Endothelial cell of umbilical vein (primary cell): ENCODE measurements at regions of chr14 and their contacts with region 1.

Region 1: DNA sequence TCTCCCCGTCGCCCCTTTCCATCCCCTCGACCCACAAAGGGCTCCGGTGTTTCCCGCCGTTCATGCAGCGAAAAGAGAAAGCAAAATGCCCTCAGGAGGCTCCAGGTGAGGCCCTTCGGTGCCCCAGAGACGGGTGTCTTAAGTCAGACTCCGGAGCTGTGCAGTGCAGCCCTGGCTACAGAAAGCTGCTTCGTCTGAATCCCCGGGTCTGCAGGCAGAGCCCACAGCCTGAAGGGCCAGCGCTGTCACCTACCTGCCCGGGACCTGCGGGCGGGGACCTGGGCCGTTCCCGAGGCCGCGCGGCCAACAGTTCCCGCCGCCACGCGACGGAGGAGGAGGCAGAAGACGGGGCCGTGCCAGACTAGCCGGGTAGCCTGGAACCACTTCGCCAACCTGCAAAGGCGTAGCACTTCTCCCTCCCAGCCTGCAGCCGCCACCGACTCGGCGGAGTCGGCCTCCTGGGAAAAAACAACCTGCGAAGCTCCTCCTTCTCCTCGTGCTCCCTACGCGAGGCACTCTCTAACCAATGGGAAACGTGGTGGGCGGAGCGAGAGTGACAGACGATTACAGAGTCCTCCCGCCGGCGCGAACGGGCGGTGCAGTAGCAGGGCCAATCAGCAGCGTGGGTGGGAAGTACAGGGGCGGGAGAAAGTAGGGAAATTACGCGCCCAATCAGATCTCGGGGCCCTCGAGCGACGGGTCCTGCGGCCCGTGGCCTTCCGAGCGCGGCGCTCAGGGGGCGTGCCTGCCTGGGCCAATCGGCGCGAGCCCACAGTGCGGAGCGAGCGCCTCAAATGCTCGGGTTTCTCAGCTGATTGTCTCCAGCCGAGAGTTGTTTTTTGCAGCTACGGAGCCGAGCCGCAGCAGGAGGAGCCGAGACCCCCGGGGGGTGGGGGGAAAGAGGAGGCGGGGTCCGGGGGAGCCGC is at the starts of genes GPR137C and TXNDC16:
- DNase-seq: peak; percentile 100
- H3K4me3 ChIP-seq: peak within 1 kb of the TSS; percentile 76 to 88 (median 84)
- H3K27ac ChIP-seq: peak within 1 kb of the TSS; percentile 37
- H3K4me1 ChIP-seq: peaks cover 9% of the 10 kb centered on the region
- H3K27me3 ChIP-seq: no peaks in the 10 kb centered on the region
- CTCF ChIP-seq: no peak
- POLR2A ChIP-seq: no peak
- total RNA-seq, gene GPR137C: 3.8 and 5.7 TPM in 2 replicates
- total RNA-seq, gene TXNDC16: 4.5 and 4.8 TPM in 2 replicates

Region 2: DNA sequence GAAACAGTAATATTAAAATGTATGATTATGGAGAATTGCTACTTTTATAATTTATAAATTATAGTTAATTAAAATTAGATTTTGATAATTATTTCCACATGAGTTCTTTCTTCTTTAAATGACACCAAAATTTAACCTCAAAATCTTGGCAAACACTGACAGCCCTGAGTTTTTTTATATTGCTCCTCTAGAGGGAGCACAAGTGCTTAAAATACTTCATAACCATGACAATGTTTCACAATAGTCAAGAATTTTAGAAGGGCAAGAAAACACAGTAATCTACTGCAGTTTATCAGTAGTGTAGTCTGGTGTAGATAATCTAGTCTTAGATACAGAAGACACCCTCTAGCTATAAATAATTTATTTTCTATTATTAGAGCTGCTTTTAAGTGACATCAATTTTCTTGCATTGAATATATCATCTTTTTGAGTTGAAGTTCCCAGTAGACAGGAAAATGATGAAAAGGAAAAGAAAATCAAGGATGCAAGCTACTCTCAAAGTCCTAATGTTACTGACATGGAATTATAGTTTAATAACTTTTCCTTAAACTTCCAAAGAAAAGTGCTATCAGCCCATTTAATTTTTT is 252.5 kb before region 1 on chr14:
- CTCF ChIA-PET with region 1: no interaction called
- POLR2A ChIA-PET with region 1: no interaction called
- dilution Hi-C with region 1: no loop called
- intact Hi-C with region 1: loop called (anchors 2 kb)
- DNase-seq: peak; percentile 47
- H3K4me3 ChIP-seq: no peak overlapping the region
- H3K27ac ChIP-seq: no peak overlapping the region
- H3K4me1 ChIP-seq: no peaks in the 10 kb centered on the region
- H3K27me3 ChIP-seq: peaks cover 8 to 17% of the 10 kb centered on the region in 2 experiments
- CTCF ChIP-seq: peak; percentile 33 to 35
- POLR2A ChIP-seq: no peak

Region 3: DNA sequence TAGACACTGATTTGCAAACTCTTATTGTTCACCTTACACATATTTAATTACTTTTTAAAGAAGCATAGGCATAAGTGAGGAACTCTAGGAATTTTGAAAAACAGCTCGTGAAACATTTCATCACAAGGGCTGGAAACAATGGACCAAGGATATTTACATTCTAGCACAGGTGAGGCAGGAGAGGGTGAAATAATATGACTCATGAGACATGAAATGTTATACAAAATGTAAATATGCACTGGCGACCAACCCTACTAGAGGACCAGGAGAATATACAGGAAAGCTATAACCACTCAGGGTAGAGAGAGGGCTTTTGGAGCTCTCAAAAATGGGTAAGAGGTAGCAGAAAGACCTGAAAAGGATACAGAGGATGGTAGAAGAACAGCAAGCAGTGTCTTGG is 122.9 kb before region 1 on chr14:
- CTCF ChIA-PET with region 1: no interaction called
- POLR2A ChIA-PET with region 1: no interaction called
- dilution Hi-C with region 1: no loop called
- intact Hi-C with region 1: no loop called
- DNase-seq: no peak
- H3K4me3 ChIP-seq: no peak overlapping the region
- H3K27ac ChIP-seq: no peak overlapping the region
- H3K4me1 ChIP-seq: no peaks in the 10 kb centered on the region
- H3K27me3 ChIP-seq: no peaks in the 10 kb centered on the region
- CTCF ChIP-seq: no peak
- POLR2A ChIP-seq: no peak

Region 4: GRCh38 chr14:52602131-52602530 is 49.8 kb after region 1 on chr14:
- CTCF ChIA-PET with region 1: no interaction called
- POLR2A ChIA-PET with region 1: no interaction called
- dilution Hi-C with region 1: no loop called
- intact Hi-C with region 1: no loop called
- DNase-seq: no peak
- H3K4me3 ChIP-seq: no peak overlapping the region
- H3K27ac ChIP-seq: no peak overlapping the region
- H3K4me1 ChIP-seq: no peaks in the 10 kb centered on the region
- H3K27me3 ChIP-seq: no peaks in the 10 kb centered on the region
- CTCF ChIP-seq: no peak
- POLR2A ChIP-seq: no peak

Region 5: DNA sequence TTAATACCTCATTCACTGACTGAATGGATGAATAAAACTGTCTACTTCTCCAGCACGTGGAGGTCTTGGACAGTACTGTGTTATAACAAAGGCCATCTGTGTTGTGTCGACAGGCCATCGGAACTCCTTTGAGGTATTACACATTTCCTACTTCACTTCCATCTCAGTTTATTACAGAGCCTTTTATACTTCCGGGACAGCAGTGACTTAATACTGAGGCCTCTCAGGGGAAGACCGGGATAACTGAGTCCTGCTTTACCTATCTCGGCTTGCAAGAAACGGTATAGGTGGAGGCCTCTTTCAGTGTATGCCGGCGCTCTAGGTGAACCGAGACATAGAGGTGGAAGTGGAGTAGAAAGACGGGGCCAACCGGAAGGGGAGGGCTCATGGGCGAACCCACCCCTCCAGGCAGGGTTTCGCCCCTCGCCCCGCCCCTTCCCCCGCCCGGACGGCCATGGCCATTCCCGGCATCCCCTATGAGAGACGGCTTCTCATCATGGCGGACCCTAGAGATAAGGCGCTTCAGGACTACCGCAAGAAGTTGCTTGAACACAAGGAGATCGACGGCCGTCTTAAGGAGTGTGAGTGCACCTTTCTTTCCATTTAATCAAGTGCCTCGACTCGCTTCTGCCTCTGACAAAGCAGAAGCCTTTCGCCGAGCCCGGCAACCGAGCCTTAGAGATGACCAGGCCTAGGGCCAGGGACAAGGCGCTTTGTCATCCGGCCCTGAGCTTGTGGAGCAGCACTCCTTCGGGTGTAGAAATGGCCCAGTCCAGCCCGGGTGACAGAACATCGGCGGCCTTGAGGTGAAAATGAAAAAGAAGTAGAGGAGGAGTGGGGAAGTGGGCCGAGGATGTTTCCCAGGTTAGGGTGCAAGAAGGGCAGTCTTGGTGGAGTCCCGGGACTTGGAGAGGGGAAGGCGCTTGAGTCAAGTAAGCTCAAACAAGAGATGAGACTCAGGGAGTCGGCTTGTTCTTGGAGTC is 154.7 kb after region 1 on chr14 and contains the start of gene PSMC6:
- CTCF ChIA-PET with region 1: no interaction called
- POLR2A ChIA-PET with region 1: interaction called, 3 read pairs
- dilution Hi-C with region 1: no loop called
- intact Hi-C with region 1: loop called (anchors 1 kb)
- DNase-seq: peak; percentile 94
- H3K4me3 ChIP-seq: peak within 1 kb of the TSS; percentile 40 to 96 (median 47)
- H3K27ac ChIP-seq: peak within 1 kb of the TSS; percentile 82
- H3K4me1 ChIP-seq: peaks cover 19% of the 10 kb centered on the region
- H3K27me3 ChIP-seq: no peaks in the 10 kb centered on the region
- CTCF ChIP-seq: no peak
- POLR2A ChIP-seq: peak; percentile 81
- total RNA-seq, gene PSMC6: 92.1 and 103 TPM in 2 replicates

Region 6: DNA sequence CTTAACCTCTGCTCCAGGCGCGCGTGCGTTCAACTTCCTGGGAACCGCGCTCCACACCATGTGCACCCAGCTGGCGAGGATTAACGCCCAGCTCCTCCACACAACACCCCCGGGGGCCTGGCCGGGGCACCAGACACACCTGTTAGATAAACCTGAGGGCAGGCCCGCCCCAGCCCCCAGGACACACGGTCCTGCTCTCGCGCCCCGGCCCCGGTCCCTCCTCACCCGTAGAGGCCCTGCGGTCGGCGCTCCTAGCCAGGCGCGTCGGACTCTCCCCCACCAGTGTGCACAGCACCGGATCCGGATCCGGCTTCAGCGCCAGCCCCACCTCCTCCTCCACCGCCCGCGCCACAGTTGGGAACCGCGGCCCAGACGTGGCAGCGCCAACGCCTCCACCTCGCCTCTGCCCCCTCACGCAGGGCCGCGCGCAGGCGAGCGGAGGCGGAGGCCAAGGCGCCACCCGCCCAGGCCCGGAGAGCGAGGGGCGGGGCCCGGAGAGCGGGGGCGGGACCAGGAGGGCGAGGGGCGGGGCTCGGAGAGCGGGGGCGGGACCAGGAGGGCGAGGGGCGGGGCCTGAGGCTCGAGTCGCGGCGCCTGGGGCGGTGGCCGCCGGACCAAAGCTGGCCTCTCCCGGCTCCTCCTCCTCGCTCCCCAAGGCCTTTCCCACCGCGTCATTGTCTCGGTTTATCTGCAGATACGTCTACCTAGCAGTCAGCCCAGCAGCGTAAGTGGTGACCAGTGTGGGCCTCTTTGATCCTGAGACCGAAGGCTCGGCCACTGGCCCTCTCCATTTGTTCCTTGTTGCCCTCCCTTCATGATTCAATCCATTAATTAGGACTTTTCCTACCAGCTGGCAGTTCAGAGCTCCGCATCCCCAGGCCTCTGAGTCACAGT is 239.1 kb after region 1 on chr14 and contains the start of gene GNPNAT1:
- CTCF ChIA-PET with region 1: no interaction called
- POLR2A ChIA-PET with region 1: interaction called, 5 read pairs
- dilution Hi-C with region 1: no loop called
- intact Hi-C with region 1: loop called (anchors 2 kb)
- DNase-seq: peak; percentile 94
- H3K4me3 ChIP-seq: peak within 1 kb of the TSS; percentile 61 to 99 (median 84)
- H3K27ac ChIP-seq: peak within 1 kb of the TSS; percentile 88
- H3K4me1 ChIP-seq: peaks cover 25% of the 10 kb centered on the region
- H3K27me3 ChIP-seq: no peaks in the 10 kb centered on the region
- CTCF ChIP-seq: no peak
- POLR2A ChIP-seq: peak; percentile 96
- total RNA-seq, gene GNPNAT1: 38.2 and 38.9 TPM in 2 replicates

Region 7: GRCh38 chr14:53217295-53217994 is 665.1 kb after region 1 on chr14:
- CTCF ChIA-PET with region 1: no interaction called
- POLR2A ChIA-PET with region 1: no interaction called
- dilution Hi-C with region 1: no loop called
- intact Hi-C with region 1: loop called (anchors 1 kb)
- DNase-seq: peak; percentile 79
- H3K4me3 ChIP-seq: peak overlapping the region in 2 of 3 experiments; percentile 22 to 69
- H3K27ac ChIP-seq: no peak overlapping the region
- H3K4me1 ChIP-seq: no peaks in the 10 kb centered on the region
- H3K27me3 ChIP-seq: no peaks in the 10 kb centered on the region
- CTCF ChIP-seq: peak; percentile 29 to 58
- POLR2A ChIP-seq: no peak